Activated CD4-positive, alpha-beta memory T cell treated with anti-CD3 and anti-CD28 coated beads for 36 hours (primary cell): ENCODE measurements at regions of chr13 and their contacts with region 1.

Region 1: GRCh38 chr13:97018029-97018831 is 24.0 kb upstream of the OXGR1 start:
- DNase-seq: peak; percentile 35
- H3K4me3 Mint-ChIP-seq: no peak overlapping the region
- H3K27ac Mint-ChIP-seq: no peak overlapping the region
- H3K4me1 Mint-ChIP-seq: peaks cover 7% of the 10 kb centered on the region
- H3K27me3 Mint-ChIP-seq: peaks cover 15% of the 10 kb centered on the region

Region 2: GRCh38 chr13:97030705-97031452 is 12.6 kb after region 1 on chr13:
- CTCF ChIA-PET with region 1: interaction called, 14 read pairs
- POLR2A ChIA-PET with region 1: no interaction called
- intact Hi-C with region 1: no loop called
- DNase-seq: no peak
- H3K4me3 Mint-ChIP-seq: no peak overlapping the region
- H3K27ac Mint-ChIP-seq: no peak overlapping the region
- H3K4me1 Mint-ChIP-seq: no peaks in the 10 kb centered on the region
- H3K27me3 Mint-ChIP-seq: peaks cover 16% of the 10 kb centered on the region

Region 3: DNA sequence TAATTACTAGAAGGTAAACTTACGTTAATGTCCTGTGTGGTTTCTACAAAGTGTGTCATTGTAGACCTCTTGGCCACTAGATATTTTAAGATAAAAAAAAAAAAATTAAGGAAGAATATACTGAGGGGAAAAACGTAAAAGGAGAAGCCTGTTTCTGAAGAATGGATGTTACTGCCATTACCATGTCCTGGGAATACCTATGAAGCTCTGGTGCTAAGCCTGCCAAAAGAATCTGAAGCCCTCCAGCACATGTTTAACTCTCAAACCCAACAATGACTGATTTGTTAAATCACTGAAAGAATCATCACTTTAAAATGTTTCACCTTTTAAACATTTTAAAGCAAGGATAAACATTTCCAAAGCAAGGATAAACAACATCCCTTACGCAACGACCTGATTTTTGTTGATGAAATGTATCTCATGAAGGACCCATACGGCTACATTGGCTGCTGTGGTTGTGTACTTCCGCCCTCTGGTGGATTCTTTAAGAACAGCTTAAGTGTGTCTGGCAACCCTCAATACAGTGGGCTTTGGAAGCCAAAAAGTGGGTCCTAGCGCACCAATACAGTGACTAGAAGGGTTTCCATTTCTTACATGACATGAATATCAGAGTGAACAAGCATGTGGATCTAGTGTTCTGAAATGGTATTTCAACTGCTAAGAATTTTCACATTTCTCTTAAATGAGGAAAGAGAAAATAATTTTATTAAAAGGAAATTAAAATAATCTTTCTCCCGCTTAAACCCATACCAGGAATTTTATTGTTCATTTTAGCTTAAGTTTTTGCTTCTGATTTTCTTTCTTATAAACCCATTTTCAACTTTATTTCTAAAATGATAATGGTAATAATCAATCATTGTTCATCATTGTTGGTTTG is 341.2 kb after region 1 on chr13:
- CTCF ChIA-PET with region 1: interaction called, 19 read pairs
- POLR2A ChIA-PET with region 1: no interaction called
- intact Hi-C with region 1: loop called (anchors 5 kb)
- DNase-seq: peak; percentile 52
- H3K4me3 Mint-ChIP-seq: no peak overlapping the region
- H3K27ac Mint-ChIP-seq: no peak overlapping the region
- H3K4me1 Mint-ChIP-seq: no peaks in the 10 kb centered on the region
- H3K27me3 Mint-ChIP-seq: no peaks in the 10 kb centered on the region

Region 4: DNA sequence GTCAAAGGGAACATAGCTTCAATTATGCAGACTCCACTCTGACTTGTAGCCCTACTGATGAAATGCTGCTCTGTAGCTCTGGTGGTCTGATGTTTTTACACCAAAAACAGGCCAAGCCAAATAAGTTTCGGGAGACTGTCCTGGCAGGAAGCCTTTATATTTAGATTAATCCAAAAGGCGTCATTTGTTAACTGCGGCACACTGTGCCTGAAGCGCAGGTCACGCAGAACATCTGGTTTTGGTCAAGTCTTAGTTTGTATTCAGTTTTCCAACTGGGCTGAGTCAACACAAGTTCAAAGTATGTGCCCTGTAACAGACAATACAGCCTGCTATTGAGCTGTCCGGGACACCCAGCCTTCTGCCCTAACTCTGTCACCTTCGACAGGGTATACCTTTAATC is 780.6 kb after region 1 on chr13:
- CTCF ChIA-PET with region 1: no interaction called
- POLR2A ChIA-PET with region 1: no interaction called
- intact Hi-C with region 1: loop called (anchors 2 kb)
- DNase-seq: no peak
- H3K4me3 Mint-ChIP-seq: no peak overlapping the region
- H3K27ac Mint-ChIP-seq: no peak overlapping the region
- H3K4me1 Mint-ChIP-seq: no peaks in the 10 kb centered on the region
- H3K27me3 Mint-ChIP-seq: peaks cover 12% of the 10 kb centered on the region